WTC11 (cell line): ENCODE measurements at regions of chr15 and their contacts with region 1.

Region 1: GRCh38 chr15:65212097-65212496 is 824 bp upstream of the CILP start:
- DNase-seq: peak; percentile 69
- ATAC-seq: peak; percentile 91
- H3K4me3 Mint-ChIP-seq: no peak overlapping the region
- H3K27ac Mint-ChIP-seq: no peak overlapping the region
- H3K4me1 Mint-ChIP-seq: no peaks in the 10 kb centered on the region; the same call in 1 of the 2 replicates
- H3K27me3 Mint-ChIP-seq: no peaks in the 10 kb centered on the region
- CTCF ChIP-seq: peak; percentile 83

Region 2: GRCh38 chr15:65194826-65195547 is 17.1 kb before region 1 on chr15:
- CTCF ChIA-PET with region 1: interaction called, 33 read pairs
- POLR2A ChIA-PET with region 1: interaction called, 3 read pairs
- DNase-seq: no peak
- ATAC-seq: peak; percentile 79
- H3K4me3 Mint-ChIP-seq: no peak overlapping the region
- H3K27ac Mint-ChIP-seq: no peak overlapping the region
- H3K4me1 Mint-ChIP-seq: peaks cover 5% of the 10 kb centered on the region; the same call in 1 of the 2 replicates
- H3K27me3 Mint-ChIP-seq: no peaks in the 10 kb centered on the region
- CTCF ChIP-seq: no peak

Region 3: GRCh38 chr15:65222891-65223290 is 10.8 kb after region 1 on chr15:
- CTCF ChIA-PET with region 1: interaction called, 19 read pairs
- POLR2A ChIA-PET with region 1: interaction called, 4 read pairs
- DNase-seq: no peak
- ATAC-seq: no peak
- H3K4me3 Mint-ChIP-seq: no peak overlapping the region
- H3K27ac Mint-ChIP-seq: no peak overlapping the region
- H3K4me1 Mint-ChIP-seq: peaks cover 8% of the 10 kb centered on the region
- H3K27me3 Mint-ChIP-seq: no peaks in the 10 kb centered on the region; the same call in 1 of the 2 replicates
- CTCF ChIP-seq: no peak

Region 4: DNA sequence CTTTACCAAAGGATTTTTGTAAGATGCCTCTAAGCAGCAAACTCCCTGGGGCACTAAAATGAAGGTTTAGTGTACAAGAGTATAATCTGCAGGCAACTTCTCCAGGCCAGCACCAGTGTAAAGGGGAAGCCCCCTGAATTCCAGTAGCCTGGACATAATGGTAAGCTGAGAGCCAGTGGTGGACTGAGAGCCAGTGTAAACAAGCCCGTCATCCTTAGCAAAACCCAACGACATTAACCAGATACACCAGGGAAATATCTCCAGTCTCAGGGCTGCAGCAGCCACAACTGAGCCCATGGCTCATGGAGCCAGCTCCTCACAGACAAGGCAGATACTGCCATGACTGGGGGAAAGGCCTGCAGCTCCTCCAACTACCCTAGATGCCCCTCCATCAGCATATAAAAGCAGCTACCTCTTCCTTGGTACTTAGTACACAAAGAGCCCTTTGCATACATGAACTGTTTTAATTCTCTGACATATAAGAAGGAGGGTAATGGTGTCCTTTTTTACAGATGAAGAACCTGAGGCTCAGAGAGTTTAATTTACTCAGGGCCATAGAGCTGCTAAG is 52.9 kb after region 1 on chr15:
- CTCF ChIA-PET with region 1: interaction called, 10 read pairs
- POLR2A ChIA-PET with region 1: no interaction called
- DNase-seq: no peak
- ATAC-seq: peak; percentile 84
- H3K4me3 Mint-ChIP-seq: no peak overlapping the region
- H3K27ac Mint-ChIP-seq: peak overlapping the region; percentile 65
- H3K4me1 Mint-ChIP-seq: peaks cover 25% of the 10 kb centered on the region
- H3K27me3 Mint-ChIP-seq: no peaks in the 10 kb centered on the region
- CTCF ChIP-seq: no peak

Region 5: GRCh38 chr15:65286704-65287519 is 74.8 kb after region 1 on chr15 and contains the start of gene PARP16:
- CTCF ChIA-PET with region 1: interaction called, 16 read pairs
- POLR2A ChIA-PET with region 1: no interaction called
- DNase-seq: peak; percentile 95
- ATAC-seq: peak; percentile 97
- H3K4me3 Mint-ChIP-seq: peak within 1 kb of the TSS; percentile 76
- H3K27ac Mint-ChIP-seq: peak within 1 kb of the TSS; percentile 83
- H3K4me1 Mint-ChIP-seq: peaks cover 17% of the 10 kb centered on the region
- H3K27me3 Mint-ChIP-seq: peaks cover 36% of the 10 kb centered on the region
- CTCF ChIP-seq: no peak
- total RNA-seq, gene PARP16: 4.7 to 6.2 TPM (median 5.8 TPM) in 3 replicates

Region 6: GRCh38 chr15:65583701-65584100 is 371.6 kb after region 1 on chr15:
- CTCF ChIA-PET with region 1: no interaction called
- POLR2A ChIA-PET with region 1: no interaction called
- DNase-seq: no peak
- ATAC-seq: no peak
- H3K4me3 Mint-ChIP-seq: no peak overlapping the region
- H3K27ac Mint-ChIP-seq: no peak overlapping the region
- H3K4me1 Mint-ChIP-seq: peaks cover 10% of the 10 kb centered on the region
- H3K27me3 Mint-ChIP-seq: no peaks in the 10 kb centered on the region
- CTCF ChIP-seq: no peak